Calu3 (cell line): ENCODE measurements at regions of chr11 and their contacts with region 1.

Region 1: GRCh38 chr11:34512840-34513681 is 533 bp downstream of the ELF5 start:
- DNase-seq: peak; percentile 79
- H3K4me3 Mint-ChIP-seq: no peak overlapping the region
- H3K27ac Mint-ChIP-seq: no peak overlapping the region
- H3K4me1 Mint-ChIP-seq: peaks cover 23% of the 10 kb centered on the region
- H3K27me3 Mint-ChIP-seq: no peaks in the 10 kb centered on the region
- CTCF ChIP-seq: peak; percentile 81

Region 2: GRCh38 chr11:34640050-34640923 is 127.2 kb after region 1 on chr11:
- CTCF ChIA-PET with region 1: no interaction called
- intact Hi-C with region 1: loop called (anchors 5 kb)
- DNase-seq: peak; percentile 88
- H3K4me3 Mint-ChIP-seq: peak overlapping the region; percentile 68
- H3K27ac Mint-ChIP-seq: peak overlapping the region; percentile 62
- H3K4me1 Mint-ChIP-seq: peaks cover 92% of the 10 kb centered on the region
- H3K27me3 Mint-ChIP-seq: no peaks in the 10 kb centered on the region
- CTCF ChIP-seq: no peak

Region 3: GRCh38 chr11:34799848-34800247 is 286.8 kb after region 1 on chr11:
- CTCF ChIA-PET with region 1: no interaction called
- intact Hi-C with region 1: loop called (anchors 5 kb)
- DNase-seq: no peak
- H3K4me3 Mint-ChIP-seq: no peak overlapping the region
- H3K27ac Mint-ChIP-seq: no peak overlapping the region
- H3K4me1 Mint-ChIP-seq: peaks cover 34% of the 10 kb centered on the region
- H3K27me3 Mint-ChIP-seq: no peaks in the 10 kb centered on the region
- CTCF ChIP-seq: no peak